ENCODE measurements at regions of chr19 and their contacts with region 1.

Region 1: GRCh38 chr19:3984908-3985642 is at the start of gene EEF2:
- DNase-seq: peak; percentile 86 to 95 (median 91)
- H3K4me3 ChIP-seq: peak within 1 kb of the TSS; percentile 90
- H3K4me3 Mint-ChIP-seq: peak within 1 kb of the TSS; percentile 94 to 99 (median 97)
- H3K27ac ChIP-seq: peak within 1 kb of the TSS; percentile 86
- H3K27ac Mint-ChIP-seq: peak within 1 kb of the TSS; percentile 92 to 98 (median 97)
- H3K4me1 ChIP-seq: peaks cover 46% of the 10 kb centered on the region
- H3K4me1 Mint-ChIP-seq: peaks cover 49 to 62% (median 57%) of the 10 kb centered on the region in 3 donors
- H3K27me3 ChIP-seq: no peaks in the 10 kb centered on the region
- H3K27me3 Mint-ChIP-seq: peaks cover 0 to 10% of the 10 kb centered on the region in 2 donors
- total RNA-seq, gene EEF2: 3,106 to 3,129 TPM

Region 2: GRCh38 chr19:2867025-2867991 is 1117.8 kb before region 1 on chr19 and contains the start of gene ZNF556:
- CTCF ChIA-PET with region 1: no interaction called
- POLR2A ChIA-PET with region 1: interaction called, 11 read pairs
- DNase-seq: no peak
- H3K4me3 ChIP-seq: no peak within 1 kb of the TSS
- H3K4me3 Mint-ChIP-seq: no peak within 1 kb of the TSS
- H3K27ac ChIP-seq: no peak within 1 kb of the TSS
- H3K27ac Mint-ChIP-seq: no peak within 1 kb of the TSS
- H3K4me1 ChIP-seq: no peaks in the 10 kb centered on the region
- H3K4me1 Mint-ChIP-seq: peaks cover 0 to 5% (median 3%) of the 10 kb centered on the region in 3 donors
- H3K27me3 ChIP-seq: no peaks in the 10 kb centered on the region
- H3K27me3 Mint-ChIP-seq: peaks cover 1 to 14% of the 10 kb centered on the region in 2 donors
- total RNA-seq, gene ZNF556: not detected

Region 3: GRCh38 chr19:3970808-3971598 is 14.1 kb before region 1 on chr19 and contains the start of gene DAPK3:
- CTCF ChIA-PET with region 1: interaction called, 14 read pairs
- POLR2A ChIA-PET with region 1: interaction called, 25 read pairs
- DNase-seq: peak; percentile 83 to 91 (median 87)
- H3K4me3 ChIP-seq: peak within 1 kb of the TSS; percentile 84
- H3K4me3 Mint-ChIP-seq: peak within 1 kb of the TSS; percentile 87 to 95 (median 89)
- H3K27ac ChIP-seq: peak within 1 kb of the TSS; percentile 84
- H3K27ac Mint-ChIP-seq: peak within 1 kb of the TSS; percentile 80 to 95 (median 90)
- H3K4me1 ChIP-seq: peaks cover 18% of the 10 kb centered on the region
- H3K4me1 Mint-ChIP-seq: peaks cover 21 to 39% (median 38%) of the 10 kb centered on the region in 3 donors
- H3K27me3 ChIP-seq: no peaks in the 10 kb centered on the region
- H3K27me3 Mint-ChIP-seq: peaks cover 0 to 3% of the 10 kb centered on the region in 2 donors
- total RNA-seq, gene DAPK3: 42.5 to 44.9 TPM

Region 4: DNA sequence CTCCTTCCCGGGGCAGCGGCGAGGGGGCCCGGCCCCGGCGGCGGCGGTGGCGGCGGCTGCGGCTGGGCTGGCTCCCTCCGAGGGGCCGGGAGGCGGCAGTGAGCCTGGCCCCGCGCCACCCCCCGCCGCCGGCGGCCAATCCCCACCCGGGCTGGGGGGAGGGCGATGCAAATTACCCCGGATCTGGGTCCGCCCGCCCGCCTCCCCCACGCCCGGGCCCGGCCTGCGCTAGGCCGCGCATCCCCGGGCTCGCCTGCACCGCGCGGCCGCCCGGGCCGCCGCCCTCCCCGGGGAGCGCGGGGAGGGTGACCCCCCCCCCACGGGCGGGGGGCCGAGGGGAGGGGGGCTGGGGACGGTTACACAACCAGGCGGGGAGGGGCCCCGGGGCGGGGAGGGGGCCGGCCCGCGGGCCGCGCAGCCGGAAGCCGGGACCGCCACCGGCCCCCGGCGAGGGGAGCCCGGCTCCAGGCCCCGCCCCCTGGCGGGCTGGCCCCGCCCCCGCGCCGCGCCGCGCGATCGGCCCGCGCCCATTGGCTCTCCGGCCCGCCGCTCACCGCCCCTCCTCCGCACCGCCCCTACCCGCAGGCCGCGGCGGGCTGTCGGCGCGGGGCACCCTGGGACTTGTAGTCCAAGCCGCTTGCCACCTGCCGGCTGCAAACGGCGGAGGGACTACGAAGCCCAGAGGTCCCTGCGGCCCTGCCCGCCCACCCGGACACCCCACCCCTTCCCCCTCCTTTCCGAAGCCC is 80.5 kb after region 1 on chr19:
- CTCF ChIA-PET with region 1: interaction called, 7 read pairs
- POLR2A ChIA-PET with region 1: interaction called, 10 read pairs
- DNase-seq: peak; percentile 95 to 98 (median 98)
- H3K4me3 ChIP-seq: no peak overlapping the region
- H3K4me3 Mint-ChIP-seq: peak overlapping the region; percentile 67 to 89 (median 80)
- H3K27ac ChIP-seq: no peak overlapping the region
- H3K27ac Mint-ChIP-seq: peak overlapping the region in 7 of 8 donors; percentile 17 to 74 (median 51)
- H3K4me1 ChIP-seq: peaks cover 56% of the 10 kb centered on the region
- H3K4me1 Mint-ChIP-seq: peaks cover 34 to 54% (median 38%) of the 10 kb centered on the region in 3 donors
- H3K27me3 ChIP-seq: no peaks in the 10 kb centered on the region
- H3K27me3 Mint-ChIP-seq: peaks cover 0 to 3% of the 10 kb centered on the region in 2 donors

Region 5: DNA sequence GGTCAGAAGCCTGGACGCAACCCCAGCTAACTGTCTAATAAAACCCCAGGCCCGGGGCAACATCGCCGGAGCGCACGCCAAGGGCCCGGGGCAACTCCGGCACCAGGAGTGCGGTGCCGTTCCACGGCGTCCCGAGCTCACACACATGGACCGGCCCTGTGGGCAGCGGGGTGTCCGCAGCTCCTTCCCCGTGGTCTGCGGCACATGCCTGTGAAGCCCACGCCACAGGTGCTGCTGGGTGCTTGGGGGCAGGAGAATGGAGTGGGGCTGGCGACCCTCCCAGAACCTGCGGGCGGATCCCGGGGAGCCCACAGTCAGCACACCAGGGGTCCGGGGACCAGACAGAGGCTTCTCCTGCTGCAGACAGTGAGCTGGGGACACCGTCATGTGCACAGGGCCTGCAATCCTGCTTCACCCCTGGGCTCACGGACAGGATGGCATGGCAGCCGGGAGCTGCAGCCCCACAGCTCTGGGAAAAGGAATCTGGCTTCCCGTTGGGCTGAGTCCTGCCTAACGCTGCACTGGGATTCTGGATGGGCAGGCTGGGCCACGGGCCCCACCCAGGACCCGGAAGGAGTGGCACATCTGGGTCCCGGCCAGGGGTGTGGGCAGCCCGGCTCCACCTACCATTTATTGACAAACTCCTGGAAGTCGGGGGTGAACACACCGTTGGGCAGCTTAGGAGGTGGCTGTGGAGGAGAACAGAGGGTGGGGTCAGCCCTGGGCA is 109.8 kb after region 1 on chr19:
- CTCF ChIA-PET with region 1: interaction called, 3 read pairs
- POLR2A ChIA-PET with region 1: interaction called, 15 read pairs
- DNase-seq: no peak
- H3K4me3 ChIP-seq: no peak overlapping the region
- H3K4me3 Mint-ChIP-seq: no peak overlapping the region
- H3K27ac ChIP-seq: no peak overlapping the region
- H3K27ac Mint-ChIP-seq: no peak overlapping the region
- H3K4me1 ChIP-seq: peaks cover 1% of the 10 kb centered on the region
- H3K4me1 Mint-ChIP-seq: peaks cover under 1 to 2% (median 2%) of the 10 kb centered on the region in 3 donors
- H3K27me3 ChIP-seq: no peaks in the 10 kb centered on the region
- H3K27me3 Mint-ChIP-seq: no peaks in the 10 kb centered on the region

Region 6: DNA sequence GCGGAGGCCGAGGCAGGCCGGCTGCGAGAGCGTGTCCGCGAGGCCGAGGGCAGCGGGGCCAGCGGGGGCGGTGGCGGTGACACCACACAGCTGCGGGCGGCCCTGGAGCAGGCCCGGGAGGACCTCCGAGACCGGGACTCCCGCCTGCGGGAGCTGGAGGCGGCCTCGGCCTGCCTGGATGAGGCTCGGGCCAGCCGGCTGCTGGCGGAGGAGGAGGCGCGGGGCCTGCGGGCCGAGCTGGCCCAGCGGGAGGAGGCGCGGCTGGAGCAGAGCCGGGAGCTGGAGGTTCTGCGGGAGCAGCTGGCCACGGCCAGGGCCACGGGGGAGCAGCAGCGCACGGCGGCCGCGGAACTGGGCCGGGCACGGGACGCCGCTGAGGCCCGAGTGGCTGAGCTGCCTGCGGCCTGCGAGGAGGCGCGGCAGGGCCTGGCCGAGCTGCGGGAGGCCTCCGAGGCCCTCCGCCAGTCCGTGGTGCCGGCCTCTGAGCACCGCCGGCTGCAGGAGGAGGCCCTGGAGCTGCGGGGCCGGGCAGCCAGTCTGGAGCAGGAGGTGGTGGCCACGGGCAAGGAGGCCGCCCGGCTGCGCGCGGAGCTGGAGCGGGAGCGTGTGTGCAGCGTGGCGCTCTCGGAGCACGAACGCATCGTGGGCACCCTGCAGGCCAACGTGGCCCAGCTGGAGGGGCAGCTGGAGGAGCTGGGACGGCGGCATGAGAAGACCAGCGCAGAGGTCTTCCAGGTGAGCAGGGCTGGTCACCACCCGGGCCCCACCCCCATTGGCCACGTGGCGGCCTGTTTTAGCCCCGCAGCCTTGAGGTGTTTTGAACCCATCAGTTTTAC is 232.6 kb after region 1 on chr19:
- CTCF ChIA-PET with region 1: no interaction called
- POLR2A ChIA-PET with region 1: no interaction called
- DNase-seq: no peak
- H3K4me3 ChIP-seq: no peak overlapping the region
- H3K4me3 Mint-ChIP-seq: no peak overlapping the region
- H3K27ac ChIP-seq: no peak overlapping the region
- H3K27ac Mint-ChIP-seq: no peak overlapping the region
- H3K4me1 ChIP-seq: no peaks in the 10 kb centered on the region
- H3K4me1 Mint-ChIP-seq: peaks cover 7 to 15% (median 13%) of the 10 kb centered on the region in 3 donors
- H3K27me3 ChIP-seq: no peaks in the 10 kb centered on the region
- H3K27me3 Mint-ChIP-seq: no peaks in the 10 kb centered on the region

Region 7: GRCh38 chr19:4791170-4792018 is 806.3 kb after region 1 on chr19 and contains the start of gene FEM1A:
- CTCF ChIA-PET with region 1: no interaction called
- POLR2A ChIA-PET with region 1: interaction called, 15 read pairs
- DNase-seq: peak; percentile 98 to 100 (median 99)
- H3K4me3 ChIP-seq: peak within 1 kb of the TSS; percentile 72
- H3K4me3 Mint-ChIP-seq: peak within 1 kb of the TSS; percentile 81 to 96 (median 84)
- H3K27ac ChIP-seq: peak within 1 kb of the TSS; percentile 84
- H3K27ac Mint-ChIP-seq: peak within 1 kb of the TSS; percentile 81 to 92 (median 88)
- H3K4me1 ChIP-seq: peaks cover 26% of the 10 kb centered on the region
- H3K4me1 Mint-ChIP-seq: peaks cover 24 to 39% (median 36%) of the 10 kb centered on the region in 3 donors
- H3K27me3 ChIP-seq: no peaks in the 10 kb centered on the region
- H3K27me3 Mint-ChIP-seq: no peaks in the 10 kb centered on the region
- total RNA-seq, gene FEM1A: 25.5 to 26.0 TPM

Measured in CD8-positive, alpha-beta memory T cell (primary cell).